T-cell (primary cell): ENCODE measurements at regions of chr11 and their contacts with region 1.

Region 1: GRCh38 chr11:727859-728748 is 19.2 kb upstream of the TALDO1 start:
- DNase-seq: peak; percentile 52 to 87 (median 70)
- ATAC-seq: peak; percentile 71 to 78 (median 76)
- H3K4me3 ChIP-seq: no peak overlapping the region
- H3K4me3 Mint-ChIP-seq: no peak overlapping the region
- H3K27ac ChIP-seq: no peak overlapping the region
- H3K27ac Mint-ChIP-seq: no peak overlapping the region
- H3K4me1 ChIP-seq: peaks cover 6 to 35% of the 10 kb centered on the region in 2 experiments
- H3K4me1 Mint-ChIP-seq: peaks cover 4 to 10% (median 6%) of the 10 kb centered on the region in 3 donors
- H3K27me3 ChIP-seq: peaks cover 0 to 35% of the 10 kb centered on the region in 2 experiments
- H3K27me3 Mint-ChIP-seq: peaks cover 3 to 4% of the 10 kb centered on the region in 2 donors

Region 2: DNA sequence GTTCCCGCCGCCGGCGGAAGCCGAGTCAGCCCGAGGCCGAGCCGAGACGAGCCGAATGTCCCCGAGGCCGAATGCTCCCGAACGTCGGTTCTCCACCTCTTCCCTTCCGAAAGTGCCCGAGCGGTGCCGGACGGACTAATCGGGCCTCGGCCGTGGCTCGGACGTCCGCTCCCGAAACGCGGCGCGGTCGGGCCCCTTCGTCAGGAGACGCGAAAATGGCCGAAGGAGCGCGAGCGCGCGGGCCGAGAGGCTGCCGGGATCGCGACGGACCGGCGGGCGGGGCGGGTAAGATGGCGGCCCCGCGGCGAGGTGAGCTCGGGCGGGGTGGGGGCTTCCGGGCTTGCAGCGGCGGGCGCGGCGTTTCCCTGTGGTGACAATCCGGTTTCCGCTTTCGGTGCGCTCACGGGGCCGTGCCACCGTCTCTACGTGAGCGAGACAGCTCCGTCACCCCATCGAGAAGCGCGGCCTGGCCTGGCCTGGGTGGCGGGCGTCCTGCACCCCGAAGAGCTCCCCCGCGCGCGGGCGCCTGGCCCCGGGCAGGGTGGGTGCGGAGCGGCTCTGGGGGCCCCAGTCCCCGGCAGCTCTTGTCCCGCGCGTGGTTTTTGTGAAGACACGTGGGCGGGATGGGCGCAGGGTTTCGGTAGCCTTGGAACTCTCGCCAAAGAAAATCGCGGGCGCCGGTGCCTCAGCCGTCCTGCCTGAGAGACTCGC is 32.4 kb before region 1 on chr11 and contains the start of gene TMEM80:
- CTCF ChIA-PET with region 1: interaction called in 1 of 2 experiments, 14 read pairs
- POLR2A ChIA-PET with region 1: interaction called in 1 of 2 experiments, 8 read pairs
- DNase-seq: peak; percentile 90 to 98 (median 95)
- ATAC-seq: peak; percentile 62 to 73 (median 72)
- H3K4me3 ChIP-seq: peak within 1 kb of the TSS; percentile 73 to 88
- H3K4me3 Mint-ChIP-seq: peak within 1 kb of the TSS; percentile 84 to 88 (median 88)
- H3K27ac ChIP-seq: peak within 1 kb of the TSS; percentile 98
- H3K27ac Mint-ChIP-seq: peak within 1 kb of the TSS; percentile 94 to 96
- H3K4me1 ChIP-seq: peaks cover 26 to 62% of the 10 kb centered on the region in 2 experiments
- H3K4me1 Mint-ChIP-seq: peaks cover 46 to 53% (median 52%) of the 10 kb centered on the region in 3 donors
- H3K27me3 ChIP-seq: no peaks in the 10 kb centered on the region
- H3K27me3 Mint-ChIP-seq: no peaks in the 10 kb centered on the region
- total RNA-seq, gene TMEM80: 21.2 to 43.9 (median 42.4) TPM

Region 3: DNA sequence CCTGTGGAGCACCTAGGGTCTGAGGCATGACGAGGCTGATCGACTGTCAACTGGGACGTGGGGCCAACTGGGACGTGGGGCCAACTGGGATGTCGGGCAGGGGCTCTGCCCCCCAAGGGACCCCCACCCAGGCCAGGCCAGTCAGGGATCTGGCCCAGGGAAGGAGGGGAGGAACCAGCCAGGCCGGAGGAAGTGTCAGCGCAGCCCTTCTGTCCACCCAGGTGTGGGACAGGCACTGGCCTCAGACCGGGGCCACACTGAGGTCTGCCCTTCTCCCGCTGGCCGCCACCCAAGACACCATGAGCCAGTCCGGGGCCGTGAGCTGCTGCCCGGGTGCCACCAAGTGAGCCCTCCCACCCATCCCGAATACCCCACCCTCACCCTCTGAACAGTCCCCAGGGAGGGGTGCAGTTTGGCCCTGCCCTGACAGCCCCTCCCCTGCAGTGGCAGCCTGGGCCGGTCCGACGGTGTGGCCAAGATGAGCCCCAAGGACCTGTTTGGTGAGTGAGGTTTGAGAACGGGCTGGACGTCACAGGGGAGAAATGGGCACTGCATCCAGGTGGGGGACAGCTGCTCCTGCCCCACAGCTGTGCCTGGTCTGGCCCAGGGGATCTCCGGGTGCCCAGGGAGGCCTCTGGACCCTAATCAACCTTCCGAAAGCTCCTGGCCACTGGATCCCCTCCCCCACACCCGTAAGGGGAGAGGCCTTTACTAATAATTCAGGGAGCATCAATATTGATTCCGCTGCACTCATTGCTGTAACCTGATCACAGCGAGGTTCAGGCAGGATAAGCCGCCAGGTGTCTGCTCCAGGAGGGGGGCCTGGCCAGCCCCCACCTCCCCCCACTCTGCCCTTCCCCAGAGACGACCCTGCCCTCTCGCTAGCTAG is 18.8 kb before region 1 on chr11:
- CTCF ChIA-PET with region 1: no interaction called
- POLR2A ChIA-PET with region 1: no interaction called
- DNase-seq: no peak
- ATAC-seq: no peak
- H3K4me3 ChIP-seq: no peak overlapping the region
- H3K4me3 Mint-ChIP-seq: no peak overlapping the region
- H3K27ac ChIP-seq: no peak overlapping the region
- H3K27ac Mint-ChIP-seq: no peak overlapping the region
- H3K4me1 ChIP-seq: peaks cover 0 to 25% of the 10 kb centered on the region in 2 experiments
- H3K4me1 Mint-ChIP-seq: peaks cover 0 to 8% (median 4%) of the 10 kb centered on the region in 3 donors
- H3K27me3 ChIP-seq: peaks cover 2 to 70% of the 10 kb centered on the region in 2 experiments
- H3K27me3 Mint-ChIP-seq: peaks cover 12 to 26% of the 10 kb centered on the region in 2 donors

Region 4: DNA sequence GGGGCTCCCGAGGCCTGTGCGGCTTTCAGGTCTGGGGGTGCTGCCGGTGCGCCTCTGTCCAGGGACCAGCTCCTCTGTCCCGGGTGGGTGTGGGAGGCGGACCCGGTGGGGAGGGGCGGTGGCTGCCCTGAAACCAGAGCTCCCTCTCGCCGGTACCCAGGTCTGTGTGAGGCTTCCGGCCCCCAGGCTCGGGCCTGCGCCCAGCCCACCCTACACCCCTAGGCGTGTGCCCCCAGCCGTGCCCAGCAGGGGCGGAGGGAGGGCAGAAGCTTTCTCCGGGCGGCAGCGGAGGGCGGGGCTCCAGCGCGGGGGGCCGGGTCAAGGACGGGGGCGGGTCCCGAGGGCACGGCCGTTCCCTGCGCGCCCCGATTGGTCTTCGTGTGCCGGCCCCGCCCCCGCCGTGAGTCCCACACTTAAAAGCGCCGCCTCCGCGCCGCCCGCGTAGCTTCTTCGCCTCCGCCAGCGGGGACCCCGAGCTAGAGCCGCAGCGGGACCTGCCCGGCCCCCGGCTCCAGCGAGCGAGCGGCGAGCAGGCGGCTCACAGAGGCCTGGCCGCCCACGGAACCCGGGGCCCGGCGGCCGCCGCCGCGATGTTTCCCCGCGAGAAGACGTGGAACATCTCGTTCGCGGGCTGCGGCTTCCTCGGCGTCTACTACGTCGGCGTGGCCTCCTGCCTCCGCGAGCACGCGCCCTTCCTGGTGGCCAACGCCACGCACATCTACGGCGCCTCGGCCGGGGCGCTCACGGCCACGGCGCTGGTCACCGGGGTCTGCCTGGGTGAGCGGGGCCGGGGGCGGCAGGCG is 91.2 kb after region 1 on chr11:
- CTCF ChIA-PET with region 1: no interaction called
- POLR2A ChIA-PET with region 1: interaction called in 1 of 2 experiments, 11 read pairs
- DNase-seq: peak; percentile 78 to 95 (median 89)
- ATAC-seq: peak; percentile 76 to 86 (median 82)
- H3K4me3 ChIP-seq: peak overlapping the region; percentile 58 to 83
- H3K4me3 Mint-ChIP-seq: peak overlapping the region; percentile 83 to 86 (median 84)
- H3K27ac ChIP-seq: peak overlapping the region; percentile 47
- H3K27ac Mint-ChIP-seq: peak overlapping the region; percentile 74 to 84
- H3K4me1 ChIP-seq: peaks cover 5 to 35% of the 10 kb centered on the region in 2 experiments
- H3K4me1 Mint-ChIP-seq: peaks cover 7 to 20% (median 13%) of the 10 kb centered on the region in 3 donors
- H3K27me3 ChIP-seq: peaks cover 0 to 5% of the 10 kb centered on the region in 2 experiments
- H3K27me3 Mint-ChIP-seq: no peaks in the 10 kb centered on the region